ENCODE measurements at regions of chr6 and their contacts with region 1.

Region 1: DNA sequence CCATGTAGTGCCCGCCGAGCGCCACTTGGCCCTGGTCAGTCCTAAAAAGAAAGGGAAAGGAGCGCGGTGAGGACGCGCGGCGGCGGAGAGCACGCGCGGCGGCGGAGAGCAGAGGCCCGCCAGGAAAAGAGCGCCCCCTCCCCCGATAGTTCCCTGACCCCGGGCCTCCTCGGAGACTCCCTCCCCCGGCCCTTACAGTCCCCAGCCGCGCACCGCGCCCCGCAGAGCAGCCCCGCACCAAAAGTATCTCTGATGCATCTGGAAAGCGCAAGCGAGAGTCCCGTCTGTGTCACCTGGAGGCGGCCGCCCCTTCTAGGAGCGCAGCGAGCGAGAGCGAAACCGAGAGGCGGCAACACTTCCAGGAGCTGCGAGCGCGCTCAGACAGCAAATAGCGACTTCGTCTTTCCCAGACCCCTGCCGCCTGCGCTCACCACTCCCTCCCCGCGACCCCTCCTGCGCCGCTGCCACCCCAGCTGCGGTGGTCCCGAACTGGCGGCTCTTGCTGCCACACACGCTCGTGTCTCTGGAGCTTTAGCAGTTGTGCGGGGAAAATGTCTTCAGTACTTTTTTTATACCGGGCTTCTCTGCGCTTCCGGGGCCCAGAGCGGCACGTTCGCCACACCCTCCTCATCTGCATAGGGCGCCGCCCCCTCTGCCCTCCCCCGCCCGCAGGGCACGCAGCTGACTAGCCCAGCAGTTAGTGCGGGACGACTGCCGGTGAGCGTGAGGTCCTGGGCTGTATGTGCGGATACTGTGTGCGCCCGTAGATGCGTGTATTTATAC is at the start of gene TENT5A:
- DNase-seq: peak; percentile 94 to 96 (median 96)
- ATAC-seq: peak; percentile 83 to 85 (median 84)
- H3K4me3 ChIP-seq: peak within 1 kb of the TSS; percentile 77 to 95 (median 86)
- H3K27ac ChIP-seq: peak within 1 kb of the TSS; percentile 93 to 99 (median 97)
- H3K4me1 ChIP-seq: peaks cover 0 to 36% (median 13%) of the 10 kb centered on the region in 12 donors
- H3K27me3 ChIP-seq: no peaks in the 10 kb centered on the region
- CTCF ChIP-seq: peak in 3 of 12 donors; percentile 22 to 37 (median 35)
- POLR2A ChIP-seq: peak; percentile 30 to 97
- total RNA-seq, gene TENT5A: 25.7 to 47.2 (median 41.4) TPM

Region 2: DNA sequence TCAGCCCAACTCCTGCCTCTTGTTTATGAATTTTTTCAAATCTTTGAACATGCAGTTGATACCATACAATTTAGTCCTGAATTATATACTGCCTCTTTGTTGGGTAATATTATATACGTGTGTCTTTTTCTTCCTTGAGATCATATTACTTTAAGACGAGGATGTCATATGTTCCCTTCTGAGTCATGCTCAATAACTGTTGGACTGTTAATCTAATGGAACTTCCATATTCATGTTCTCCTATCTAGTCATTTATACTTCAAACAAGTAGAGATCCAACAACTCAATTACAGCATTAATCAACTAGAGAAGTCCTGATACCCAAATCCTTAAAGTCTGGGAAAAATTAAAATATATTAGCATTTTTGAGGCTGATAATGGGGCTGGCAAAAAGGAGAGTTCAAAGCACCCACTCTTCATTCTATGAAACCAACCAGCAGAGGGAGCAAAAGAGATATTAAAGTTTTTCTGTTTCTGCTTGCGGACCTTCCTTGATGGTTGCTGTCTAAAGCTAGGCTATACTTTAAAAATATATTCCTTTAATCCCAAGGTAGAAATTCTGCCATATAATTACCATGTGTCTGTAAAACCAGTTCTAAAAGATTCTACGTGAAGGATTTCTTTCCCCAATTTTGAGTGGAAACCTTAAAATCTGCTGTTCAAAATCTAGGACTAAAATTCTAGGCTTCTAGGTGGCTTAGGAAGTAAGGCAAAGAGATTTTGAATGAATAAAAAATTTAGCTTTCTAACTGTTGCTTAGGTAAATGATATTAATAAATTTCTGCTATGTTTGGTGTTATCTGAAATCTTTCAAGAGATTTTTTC is 1147.0 kb before region 1 on chr6:
- intact Hi-C with region 1: loop called in 6 of 10 experiments (anchors 2 to 10 kb)
- DNase-seq: no peak
- ATAC-seq: peak in 2 of 4 donors; percentile 48 to 70
- H3K4me3 ChIP-seq: no peak overlapping the region
- H3K27ac ChIP-seq: no peak overlapping the region
- H3K4me1 ChIP-seq: peaks cover 0 to 25% (median 7%) of the 10 kb centered on the region in 12 donors
- H3K27me3 ChIP-seq: no peaks in the 10 kb centered on the region
- CTCF ChIP-seq: peak; percentile 28 to 70 (median 52)
- POLR2A ChIP-seq: no peak

Region 3: DNA sequence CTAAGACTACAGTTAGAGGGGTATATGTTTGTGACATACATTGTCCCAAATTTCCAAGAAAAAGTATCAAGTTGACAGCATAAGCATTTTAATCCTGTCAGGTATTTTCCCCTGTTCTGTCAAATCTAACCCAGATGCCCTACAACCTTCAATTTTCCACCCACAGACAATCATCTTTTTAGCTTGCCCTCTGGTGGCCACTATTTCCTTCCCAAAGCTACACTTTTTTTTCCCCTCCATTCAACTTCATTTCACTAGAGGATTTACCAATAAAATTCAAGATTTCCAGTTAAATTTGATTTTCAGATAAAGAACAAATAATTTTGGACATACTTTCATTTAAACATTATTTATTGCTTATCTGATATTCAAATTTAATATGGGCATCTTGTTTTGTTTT is 286.5 kb before region 1 on chr6:
- intact Hi-C with region 1: loop called in 2 of 10 experiments (anchors 5 kb)
- DNase-seq: no peak
- ATAC-seq: no peak
- H3K4me3 ChIP-seq: no peak overlapping the region
- H3K27ac ChIP-seq: no peak overlapping the region
- H3K4me1 ChIP-seq: no peaks in the 10 kb centered on the region
- H3K27me3 ChIP-seq: no peaks in the 10 kb centered on the region
- CTCF ChIP-seq: peak in 11 of 12 donors; percentile 35 to 57 (median 52)
- POLR2A ChIP-seq: no peak

Region 4: GRCh38 chr6:81683928-81684327 is 68.4 kb before region 1 on chr6:
- intact Hi-C with region 1: loop called in 2 of 10 experiments (anchors 10 kb)
- DNase-seq: no peak
- ATAC-seq: no peak
- H3K4me3 ChIP-seq: no peak overlapping the region
- H3K27ac ChIP-seq: no peak overlapping the region
- H3K4me1 ChIP-seq: peaks cover 0 to 21% (median 1%) of the 10 kb centered on the region in 12 donors
- H3K27me3 ChIP-seq: no peaks in the 10 kb centered on the region
- CTCF ChIP-seq: no peak
- POLR2A ChIP-seq: no peak

Region 5: GRCh38 chr6:81906709-81907204 is 154.4 kb after region 1 on chr6:
- intact Hi-C with region 1: loop called in 2 of 10 experiments (anchors 5 kb)
- DNase-seq: peak in 1 of 5 donors; percentile 33
- ATAC-seq: peak; percentile 56 to 76 (median 70)
- H3K4me3 ChIP-seq: no peak overlapping the region
- H3K27ac ChIP-seq: peak overlapping the region in 8 of 12 donors; percentile 13 to 67 (median 30)
- H3K4me1 ChIP-seq: peaks cover 0 to 38% (median 6%) of the 10 kb centered on the region in 12 donors
- H3K27me3 ChIP-seq: no peaks in the 10 kb centered on the region
- CTCF ChIP-seq: no peak
- POLR2A ChIP-seq: no peak

Region 6: DNA sequence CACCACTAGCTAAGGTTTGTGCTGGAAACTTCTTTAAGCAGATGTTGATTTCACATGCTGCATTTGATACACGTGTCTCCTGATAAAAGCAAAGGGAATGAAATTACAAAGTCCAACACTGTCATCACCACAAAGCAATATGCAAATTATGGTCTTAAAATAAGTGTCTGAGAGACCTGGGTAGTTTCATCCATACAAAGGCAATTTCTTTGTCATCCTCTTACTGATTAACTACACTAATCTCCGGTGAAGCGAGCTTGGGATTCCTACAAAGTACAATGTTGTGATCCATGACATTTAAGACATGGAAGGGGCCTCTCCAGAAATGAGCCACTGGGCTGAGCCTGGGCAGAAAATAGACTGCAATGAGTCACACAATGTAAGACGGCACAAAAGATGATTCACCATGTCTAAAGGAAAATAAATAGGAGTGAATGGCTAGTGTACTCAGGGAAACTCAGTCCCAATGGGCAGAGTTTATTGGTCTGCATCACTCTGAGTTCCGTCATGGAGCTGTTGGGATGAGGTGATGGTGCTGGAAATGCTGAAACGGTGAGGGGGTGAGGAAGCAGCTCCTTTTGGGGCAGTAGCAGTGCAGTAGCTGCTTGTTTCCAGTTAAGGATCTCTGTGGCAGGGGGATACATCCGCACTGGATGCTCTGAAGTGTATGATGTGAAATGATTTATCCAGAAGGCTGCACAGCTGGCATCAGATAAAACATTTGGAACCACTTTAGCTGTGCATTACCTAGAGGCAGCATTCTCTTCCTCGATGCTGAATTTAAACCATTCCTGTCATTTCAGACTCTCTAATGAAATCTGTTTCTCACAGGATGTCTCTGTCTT is 391.9 kb after region 1 on chr6:
- intact Hi-C with region 1: loop called in 1 of 10 experiments (anchors 10 kb)
- DNase-seq: peak in 4 of 5 donors; percentile 38 to 69 (median 46)
- ATAC-seq: peak; percentile 80 to 96 (median 88)
- H3K4me3 ChIP-seq: peak overlapping the region in 1 of 12 donors; percentile 5
- H3K27ac ChIP-seq: peak overlapping the region; percentile 60 to 92 (median 77)
- H3K4me1 ChIP-seq: peaks cover 0 to 33% (median 14%) of the 10 kb centered on the region in 12 donors
- H3K27me3 ChIP-seq: no peaks in the 10 kb centered on the region
- CTCF ChIP-seq: no peak
- POLR2A ChIP-seq: no peak

Measured in heart left ventricle (tissue), 16 donors.